Activated CD4-positive, alpha-beta T cell treated with anti-CD3 and anti-CD28 coated beads, Interleukin-2, amount 10 ng/mL, durations not matched to agents 7 days and 5 days (primary cell): ENCODE measurements at regions of chr13 and their contacts with region 1.

Region 1: DNA sequence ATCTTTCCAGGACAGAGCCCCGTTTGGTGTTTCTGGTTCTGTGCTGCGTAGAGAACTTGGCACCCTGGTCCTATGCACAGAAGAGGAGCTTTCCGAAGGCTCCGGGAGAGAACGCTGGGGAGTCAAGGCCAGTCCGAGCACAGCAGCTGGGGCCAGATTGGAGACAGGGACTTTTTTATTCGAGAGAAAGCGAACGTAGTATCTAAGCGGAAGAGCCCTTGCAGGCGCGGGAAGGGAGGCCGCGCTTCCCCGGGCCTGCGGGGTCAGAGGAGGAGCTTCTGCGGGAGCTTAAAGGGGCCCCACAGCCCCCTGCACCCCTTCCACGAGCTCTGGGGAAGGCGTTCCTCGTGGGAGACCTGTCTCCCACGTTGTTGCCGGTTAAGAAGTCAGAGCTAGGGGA is 48.6 kb upstream of the ARHGEF7 start:
- DNase-seq: no peak
- H3K4me3 Mint-ChIP-seq: peak overlapping the region; percentile 57
- H3K27ac Mint-ChIP-seq: peak overlapping the region; percentile 61
- H3K4me1 Mint-ChIP-seq: peaks cover 11% of the 10 kb centered on the region
- H3K27me3 Mint-ChIP-seq: peaks cover 56% of the 10 kb centered on the region

Region 2: DNA sequence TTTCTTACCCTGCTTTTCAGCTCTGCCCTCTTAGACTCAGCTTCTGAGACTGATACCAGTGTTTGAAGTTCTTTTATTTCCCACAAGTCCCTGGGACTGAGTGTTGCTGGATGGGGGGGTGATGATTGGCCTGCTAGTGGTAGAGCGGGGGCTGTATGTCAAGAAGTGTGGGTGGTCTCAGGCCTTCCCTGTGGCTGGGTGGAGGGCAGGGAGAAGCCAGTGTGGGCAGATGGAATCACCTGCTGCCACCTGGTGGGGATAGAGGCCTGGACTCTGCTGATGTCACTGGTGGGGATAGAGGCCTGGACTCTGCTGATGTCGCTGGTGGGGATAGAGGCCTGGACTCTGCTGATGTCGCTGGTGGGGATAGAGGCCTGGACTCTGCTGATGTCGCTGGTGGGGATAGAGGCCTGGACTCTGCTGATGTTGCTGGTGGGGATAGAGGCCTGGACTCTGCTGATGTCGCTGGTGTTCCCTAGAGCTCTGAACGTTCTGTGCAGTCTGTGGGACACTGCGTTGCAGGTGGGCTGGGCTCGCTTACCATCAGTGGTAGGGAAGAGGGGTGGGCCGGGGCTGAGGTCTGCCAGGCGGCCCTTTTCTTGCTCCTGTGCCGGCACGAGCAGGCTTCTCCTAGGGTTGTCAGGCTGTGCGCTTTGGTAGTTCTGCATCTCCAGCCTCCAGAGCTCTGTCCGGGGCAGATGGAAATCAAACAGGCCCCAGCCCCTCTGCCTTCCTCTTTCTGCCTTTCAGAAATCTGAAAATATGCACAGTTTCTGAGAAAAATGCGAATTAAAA is 149.8 kb after region 1 on chr13:
- CTCF ChIA-PET with region 1: interaction called, 11 read pairs
- POLR2A ChIA-PET with region 1: no interaction called
- DNase-seq: peak; percentile 46
- H3K4me3 Mint-ChIP-seq: no peak overlapping the region
- H3K27ac Mint-ChIP-seq: no peak overlapping the region
- H3K4me1 Mint-ChIP-seq: peaks cover 11% of the 10 kb centered on the region
- H3K27me3 Mint-ChIP-seq: no peaks in the 10 kb centered on the region

Region 3: DNA sequence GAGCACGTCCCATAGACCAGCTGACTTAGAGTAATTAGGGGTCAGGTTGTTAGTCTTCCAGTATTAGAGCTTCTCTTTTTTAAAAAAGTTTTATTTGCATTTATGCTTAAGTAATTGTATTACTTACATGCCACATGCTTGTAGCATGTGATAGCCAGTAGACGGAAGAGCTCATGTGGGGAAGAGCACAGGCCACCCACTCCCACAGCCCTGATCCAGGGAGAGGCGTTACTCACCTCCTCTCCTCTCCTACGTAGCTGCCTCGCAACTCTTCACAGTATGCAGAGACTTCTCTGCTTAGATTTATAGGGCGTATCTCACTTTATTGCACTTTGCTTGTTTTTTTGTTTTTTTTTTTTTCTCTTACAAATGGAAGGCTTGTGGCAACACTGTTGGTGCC is 158.6 kb after region 1 on chr13:
- CTCF ChIA-PET with region 1: interaction called, 13 read pairs
- POLR2A ChIA-PET with region 1: no interaction called
- DNase-seq: no peak
- H3K4me3 Mint-ChIP-seq: no peak overlapping the region
- H3K27ac Mint-ChIP-seq: no peak overlapping the region
- H3K4me1 Mint-ChIP-seq: peaks cover 24% of the 10 kb centered on the region
- H3K27me3 Mint-ChIP-seq: no peaks in the 10 kb centered on the region